ENCODE measurements at regions of chr4 and their contacts with region 1.

Region 1: DNA sequence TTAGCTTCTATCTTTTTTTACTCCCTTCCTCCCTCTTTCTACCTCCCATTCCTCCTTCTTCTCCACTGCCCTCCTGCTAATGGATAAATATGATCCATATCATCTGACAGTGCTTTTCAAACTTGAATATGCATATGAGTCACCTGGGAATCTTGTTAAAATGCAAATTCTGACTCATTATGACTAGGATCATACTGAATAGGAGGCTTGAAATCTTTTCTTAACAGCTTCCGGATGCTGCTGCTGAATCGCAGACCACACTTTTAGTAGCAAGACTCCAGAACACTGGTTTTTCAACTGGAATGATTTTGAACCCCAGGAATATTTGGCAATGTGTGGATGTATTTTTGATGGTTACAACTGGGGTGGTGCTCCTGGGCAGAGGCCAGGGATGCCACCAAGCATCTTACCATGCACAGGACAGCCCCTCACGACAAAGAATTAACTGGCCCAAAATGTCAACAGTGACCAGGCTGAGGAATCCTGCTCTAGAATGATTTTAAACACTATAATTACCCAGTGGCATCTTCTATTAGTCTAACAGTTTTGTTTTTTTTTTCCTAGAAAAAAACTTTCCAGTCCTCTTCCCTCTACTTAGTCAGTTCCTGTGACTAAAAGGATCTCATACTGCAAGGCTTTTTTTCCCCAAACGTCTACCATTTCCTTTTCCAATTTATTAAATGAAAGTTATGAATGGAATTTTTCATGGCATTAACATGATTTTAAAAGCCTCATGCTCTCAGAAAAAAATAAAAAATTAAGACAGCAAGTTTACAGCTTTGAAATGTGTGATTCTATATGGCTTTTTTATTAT is 10.6 kb upstream of the PYURF start:
- DNase-seq: peak; percentile 92
- ATAC-seq: peak; percentile 83
- H3K4me3 ChIP-seq: peak overlapping the region; percentile 48; the same call in 1 of the 2 replicates
- H3K27ac ChIP-seq: peak overlapping the region; percentile 99
- H3K4me1 ChIP-seq: peaks cover 28% of the 10 kb centered on the region
- H3K27me3 ChIP-seq: no peaks in the 10 kb centered on the region
- CTCF ChIP-seq: no peak

Region 2: DNA sequence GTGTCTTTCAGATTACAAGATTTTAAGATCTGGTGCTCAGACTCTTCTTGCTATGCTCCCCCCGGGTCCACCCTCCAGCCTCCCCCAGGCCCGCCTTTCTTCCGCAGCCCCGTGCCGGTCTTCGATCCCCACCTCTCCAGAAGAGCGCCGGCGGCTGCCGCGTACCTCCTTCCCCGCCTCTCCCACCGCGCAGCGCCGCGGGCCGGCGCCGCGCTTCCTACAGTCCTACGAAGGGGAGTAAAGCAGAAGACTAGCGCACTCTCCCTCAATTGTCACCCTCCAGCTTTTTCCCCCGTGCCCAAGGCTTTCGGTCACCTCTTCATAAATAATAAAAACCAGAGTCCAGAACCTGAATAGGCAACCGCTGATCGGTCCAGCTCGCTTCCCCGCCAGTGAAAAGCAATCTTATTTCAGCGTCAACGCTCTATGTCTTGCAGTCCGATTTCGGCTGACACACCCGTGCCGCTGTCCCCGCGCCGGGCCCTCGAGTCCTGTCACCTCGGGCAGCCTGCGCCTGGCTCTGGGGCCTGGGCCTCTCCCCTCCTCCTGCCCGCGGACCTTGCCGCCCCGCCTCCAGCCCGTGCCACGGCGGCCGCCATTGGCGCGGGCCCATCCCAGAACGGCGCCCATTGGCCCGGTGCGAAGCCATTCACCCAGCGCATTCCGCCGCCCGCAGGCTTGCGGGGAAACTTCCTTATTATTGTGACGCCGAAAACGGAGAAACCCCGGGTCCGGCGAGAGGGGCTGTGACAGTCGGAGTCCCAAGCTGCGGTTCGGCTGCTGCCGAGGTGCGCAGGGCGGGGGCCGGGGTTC is 57.8 kb after region 1 on chr4 and contains the start of gene HERC3:
- CTCF ChIA-PET with region 1: interaction called, 3 read pairs
- POLR2A ChIA-PET with region 1: interaction called, 5 read pairs
- intact Hi-C with region 1: loop called (anchors 2 kb)
- DNase-seq: peak; percentile 83
- ATAC-seq: peak; percentile 94
- H3K4me3 ChIP-seq: peak within 1 kb of the TSS; percentile 71
- H3K27ac ChIP-seq: no peak within 1 kb of the TSS
- H3K4me1 ChIP-seq: peaks cover 7% of the 10 kb centered on the region
- H3K27me3 ChIP-seq: no peaks in the 10 kb centered on the region
- CTCF ChIP-seq: no peak
- total RNA-seq, gene HERC3: 5.2 and 5.4 TPM in 2 replicates

Region 3: GRCh38 chr4:88623097-88623496 is 89.0 kb after region 1 on chr4:
- CTCF ChIA-PET with region 1: no interaction called
- POLR2A ChIA-PET with region 1: no interaction called
- intact Hi-C with region 1: loop called (anchors 1 kb)
- DNase-seq: peak; percentile 95
- ATAC-seq: peak; percentile 96
- H3K4me3 ChIP-seq: no peak overlapping the region
- H3K27ac ChIP-seq: peak overlapping the region; percentile 85
- H3K4me1 ChIP-seq: peaks cover 32% of the 10 kb centered on the region
- H3K27me3 ChIP-seq: no peaks in the 10 kb centered on the region
- CTCF ChIP-seq: no peak

Region 4: DNA sequence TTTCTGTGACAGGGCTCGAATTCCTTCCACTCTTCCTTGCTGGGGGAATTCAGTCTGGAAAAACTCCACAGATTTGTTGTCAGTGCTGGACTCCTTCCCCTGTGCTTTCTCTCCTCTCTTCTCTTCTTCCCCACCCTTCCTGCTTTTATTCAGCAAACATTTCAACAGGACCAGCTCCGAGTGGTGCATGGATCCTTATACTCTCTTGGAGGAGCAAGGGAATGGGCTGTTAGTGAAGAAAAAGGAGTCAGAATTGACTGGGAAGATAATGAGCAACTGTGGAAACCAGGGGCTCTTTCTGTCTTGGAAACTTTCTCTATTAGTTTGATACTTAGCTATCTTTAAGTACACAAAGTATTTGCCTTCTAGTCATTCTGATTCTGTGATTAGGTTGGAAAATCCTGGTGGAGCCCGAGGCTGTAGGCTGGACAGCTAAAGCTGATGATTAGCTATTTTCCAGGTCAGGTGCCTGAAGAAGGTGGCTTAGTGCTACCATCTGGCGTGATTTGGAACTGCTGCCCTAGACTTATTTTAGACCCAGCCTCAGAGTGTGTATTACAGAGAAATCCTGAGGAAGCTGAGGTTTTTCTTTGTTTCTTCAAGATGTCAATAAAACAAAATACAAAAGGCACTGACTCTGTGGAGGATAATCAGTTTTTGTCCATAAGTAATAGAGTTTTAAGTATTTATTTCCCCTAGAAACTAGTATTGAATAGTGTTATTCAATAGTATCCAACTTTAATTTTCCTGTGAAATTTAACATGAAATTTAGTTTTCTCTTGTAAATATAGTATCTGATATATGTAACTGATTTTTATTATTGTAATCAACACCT is 125.1 kb after region 1 on chr4:
- CTCF ChIA-PET with region 1: interaction called, 21 read pairs
- POLR2A ChIA-PET with region 1: no interaction called
- intact Hi-C with region 1: loop called (anchors 1 kb)
- DNase-seq: peak; percentile 77
- ATAC-seq: peak; percentile 78
- H3K4me3 ChIP-seq: peak overlapping the region; percentile 30; the same call in 1 of the 2 replicates
- H3K27ac ChIP-seq: peak overlapping the region; percentile 99
- H3K4me1 ChIP-seq: peaks cover 39% of the 10 kb centered on the region
- H3K27me3 ChIP-seq: no peaks in the 10 kb centered on the region
- CTCF ChIP-seq: peak; percentile 83

Region 5: DNA sequence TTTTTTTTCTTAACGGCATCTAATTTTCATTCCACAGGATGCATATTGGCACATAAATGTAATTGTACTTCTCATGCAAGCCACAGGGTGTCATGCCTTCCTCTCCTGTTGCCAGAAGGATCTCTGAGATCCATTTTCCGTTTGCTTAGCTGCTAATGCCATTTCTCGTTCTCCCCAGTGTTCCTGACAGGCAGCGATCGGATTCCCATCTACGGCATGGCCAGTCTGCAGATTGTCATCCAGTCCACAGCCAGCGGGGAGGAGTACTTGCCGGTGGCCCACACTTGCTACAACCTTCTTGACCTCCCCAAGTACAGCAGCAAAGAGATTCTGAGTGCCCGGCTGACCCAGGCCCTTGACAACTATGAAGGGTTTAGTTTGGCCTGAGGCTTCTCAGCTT is 172.4 kb after region 1 on chr4:
- CTCF ChIA-PET with region 1: no interaction called
- POLR2A ChIA-PET with region 1: no interaction called
- intact Hi-C with region 1: loop called (anchors 2 kb)
- DNase-seq: peak; percentile 67
- ATAC-seq: peak; percentile 68
- H3K4me3 ChIP-seq: 0 out of 2 replicates have a peak overlapping the region, but pooled peaks have one; percentile 14
- H3K27ac ChIP-seq: no peak overlapping the region
- H3K4me1 ChIP-seq: peaks cover 12% of the 10 kb centered on the region
- H3K27me3 ChIP-seq: no peaks in the 10 kb centered on the region
- CTCF ChIP-seq: peak; percentile 69

Region 6: DNA sequence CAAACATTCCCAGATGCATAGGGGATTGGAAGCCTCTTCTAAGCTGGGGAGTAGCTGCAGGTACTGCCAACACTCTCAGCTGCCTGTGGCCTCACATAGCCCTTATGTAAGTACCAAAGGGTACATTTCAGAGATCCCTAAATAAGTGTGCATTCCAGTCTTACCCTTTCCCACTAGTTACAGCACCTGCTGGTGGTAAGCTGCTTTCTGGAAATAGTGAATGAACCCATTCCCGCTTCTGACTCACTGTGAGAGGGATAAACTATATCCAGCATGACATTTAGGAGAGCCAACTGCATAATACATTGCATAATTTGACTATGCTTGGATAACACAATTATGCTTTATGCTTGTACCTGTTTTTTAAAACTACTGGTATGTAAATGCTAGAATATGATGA is 373.9 kb after region 1 on chr4:
- CTCF ChIA-PET with region 1: no interaction called
- POLR2A ChIA-PET with region 1: no interaction called
- intact Hi-C with region 1: no loop called
- DNase-seq: peak; percentile 7
- ATAC-seq: no peak
- H3K4me3 ChIP-seq: no peak overlapping the region
- H3K27ac ChIP-seq: no peak overlapping the region
- H3K4me1 ChIP-seq: no peaks in the 10 kb centered on the region
- H3K27me3 ChIP-seq: no peaks in the 10 kb centered on the region
- CTCF ChIP-seq: no peak

Region 7: DNA sequence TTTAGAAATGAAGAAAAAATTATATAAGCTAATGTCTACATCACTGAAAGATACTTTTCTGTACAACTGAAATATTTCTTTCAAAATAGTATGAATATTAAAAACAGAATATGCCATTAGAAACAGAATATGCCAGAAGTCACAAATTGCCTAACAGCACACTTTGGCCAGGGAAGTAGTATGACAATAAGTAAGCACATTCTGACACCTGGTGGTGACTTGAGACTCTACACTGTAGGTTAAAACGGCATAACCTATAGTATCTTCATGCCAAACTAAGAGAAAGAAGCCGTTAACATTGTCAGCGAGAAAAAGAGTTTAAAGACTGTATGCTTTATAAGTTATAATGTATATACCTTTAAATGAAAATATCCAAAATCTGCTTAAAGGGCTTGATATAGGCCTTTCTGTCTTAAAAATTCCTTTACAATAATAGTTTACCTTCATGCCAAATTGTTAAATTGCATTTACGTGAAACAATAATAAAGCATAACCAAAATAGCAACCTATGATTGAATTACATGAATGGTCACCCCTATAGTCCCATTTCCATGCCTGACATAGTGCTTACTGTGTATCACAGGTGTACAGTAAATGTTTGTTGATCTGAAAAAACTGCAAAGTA is 490.0 kb after region 1 on chr4:
- CTCF ChIA-PET with region 1: no interaction called
- POLR2A ChIA-PET with region 1: no interaction called
- intact Hi-C with region 1: loop called (anchors 5 kb)
- DNase-seq: peak; percentile 76
- ATAC-seq: peak; percentile 81
- H3K4me3 ChIP-seq: no peak overlapping the region
- H3K27ac ChIP-seq: no peak overlapping the region
- H3K4me1 ChIP-seq: no peaks in the 10 kb centered on the region
- H3K27me3 ChIP-seq: no peaks in the 10 kb centered on the region
- CTCF ChIP-seq: peak; percentile 82